Activated CD8-positive, alpha-beta T cell treated with anti-CD3 and anti-CD28 coated beads for 36 hours (primary cell): ENCODE measurements at regions of chr13 and their contacts with region 1.

Region 1: DNA sequence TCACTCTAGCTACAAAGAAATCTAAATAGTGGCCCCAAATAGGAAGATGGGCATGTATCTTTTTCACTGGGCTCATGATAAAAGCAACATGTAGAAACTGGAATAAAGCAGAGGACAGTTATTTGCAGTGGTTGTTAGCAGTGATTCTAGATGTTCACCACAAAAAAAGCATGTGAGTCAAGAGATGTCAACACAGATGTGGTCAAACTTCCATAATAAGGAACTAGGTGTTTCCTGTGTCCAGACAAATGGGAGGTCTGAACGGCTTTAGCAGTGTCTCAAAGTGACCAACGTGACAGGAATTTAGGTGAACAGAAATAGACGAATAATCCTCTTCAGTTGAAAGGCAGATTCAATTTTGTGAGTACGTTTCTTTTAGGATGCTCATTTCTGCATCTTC is 162.7 kb downstream of the TBC1D4 start:
- DNase-seq: no peak
- ATAC-seq: no peak
- H3K4me3 Mint-ChIP-seq: peak overlapping the region; percentile 36
- H3K27ac Mint-ChIP-seq: peak overlapping the region; percentile 93
- H3K4me1 Mint-ChIP-seq: peaks cover 56% of the 10 kb centered on the region
- H3K27me3 Mint-ChIP-seq: no peaks in the 10 kb centered on the region
- CTCF ChIP-seq: no peak

Region 2: GRCh38 chr13:75226733-75227435 is 92.4 kb before region 1 on chr13:
- CTCF ChIA-PET with region 1: no interaction called
- POLR2A ChIA-PET with region 1: no interaction called
- intact Hi-C with region 1: no loop called
- DNase-seq: peak; percentile 8
- ATAC-seq: peak; percentile 55
- H3K4me3 Mint-ChIP-seq: no peak overlapping the region
- H3K27ac Mint-ChIP-seq: no peak overlapping the region
- H3K4me1 Mint-ChIP-seq: peaks cover 2% of the 10 kb centered on the region
- H3K27me3 Mint-ChIP-seq: no peaks in the 10 kb centered on the region
- CTCF ChIP-seq: no peak

Region 3: GRCh38 chr13:75341028-75341427 is 21.8 kb after region 1 on chr13:
- CTCF ChIA-PET with region 1: no interaction called
- POLR2A ChIA-PET with region 1: no interaction called
- intact Hi-C with region 1: no loop called
- DNase-seq: no peak
- ATAC-seq: no peak
- H3K4me3 Mint-ChIP-seq: no peak overlapping the region
- H3K27ac Mint-ChIP-seq: no peak overlapping the region
- H3K4me1 Mint-ChIP-seq: peaks cover 2% of the 10 kb centered on the region
- H3K27me3 Mint-ChIP-seq: no peaks in the 10 kb centered on the region
- CTCF ChIP-seq: no peak

Region 4: DNA sequence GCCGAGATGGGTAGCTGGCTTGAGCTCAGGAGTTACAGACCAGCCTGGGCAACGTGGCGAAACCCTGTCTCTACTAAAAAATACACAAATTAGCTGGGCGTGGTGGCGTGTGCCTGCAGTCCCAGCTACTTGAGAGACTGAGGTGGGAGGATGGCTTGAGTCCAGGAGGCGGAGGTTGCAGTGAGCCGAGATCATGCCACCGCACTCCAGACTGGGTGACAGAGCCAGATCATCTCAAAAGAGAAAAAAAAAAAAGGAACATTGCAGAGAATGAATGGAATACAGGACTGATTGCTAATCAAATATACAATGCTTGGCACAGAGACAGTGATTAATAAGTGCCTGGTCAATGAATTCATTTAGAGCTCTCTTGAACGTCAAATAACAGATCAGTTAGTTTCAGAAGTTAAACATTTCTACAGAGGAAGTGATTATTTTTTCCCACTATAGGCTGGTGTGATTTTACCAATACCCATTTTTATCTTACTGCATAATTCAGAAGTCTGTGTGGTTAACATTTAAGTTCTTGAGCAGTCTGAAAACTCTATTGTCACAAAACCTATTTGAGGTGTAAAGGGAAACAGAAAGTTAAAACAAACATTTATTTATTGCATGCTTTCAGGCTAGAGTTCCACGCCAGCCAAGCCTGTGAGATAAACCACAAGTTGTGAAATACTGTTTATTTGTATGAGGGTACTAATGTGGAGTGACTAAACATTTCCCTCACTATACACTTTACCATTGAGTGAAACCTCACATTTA is 170.4 kb after region 1 on chr13:
- CTCF ChIA-PET with region 1: no interaction called
- POLR2A ChIA-PET with region 1: no interaction called
- intact Hi-C with region 1: loop called (anchors 5 kb)
- DNase-seq: peak; percentile 42
- ATAC-seq: peak; percentile 70
- H3K4me3 Mint-ChIP-seq: peak overlapping the region; percentile 34
- H3K27ac Mint-ChIP-seq: peak overlapping the region; percentile 48
- H3K4me1 Mint-ChIP-seq: peaks cover 23% of the 10 kb centered on the region
- H3K27me3 Mint-ChIP-seq: peaks cover 32% of the 10 kb centered on the region
- CTCF ChIP-seq: no peak